ENCODE measurements at regions of chr12 and their contacts with region 1.

Region 1: GRCh38 chr12:2783936-2784600 is 10.7 kb upstream of the FKBP4 start:
- DNase-seq: peak; percentile 38 to 51 (median 45)
- H3K4me3 ChIP-seq: no peak overlapping the region
- H3K4me3 Mint-ChIP-seq: peak overlapping the region; percentile 70 to 92 (median 83)
- H3K27ac ChIP-seq: no peak overlapping the region
- H3K27ac Mint-ChIP-seq: peak overlapping the region in 3 of 7 donors; percentile 53 to 79 (median 55)
- H3K4me1 ChIP-seq: peaks cover 9% of the 10 kb centered on the region
- H3K4me1 Mint-ChIP-seq: peaks cover 9 to 13% (median 11%) of the 10 kb centered on the region in 4 donors
- H3K27me3 ChIP-seq: no peaks in the 10 kb centered on the region
- H3K27me3 Mint-ChIP-seq: peaks cover 9 to 17% of the 10 kb centered on the region in 2 donors

Region 2: DNA sequence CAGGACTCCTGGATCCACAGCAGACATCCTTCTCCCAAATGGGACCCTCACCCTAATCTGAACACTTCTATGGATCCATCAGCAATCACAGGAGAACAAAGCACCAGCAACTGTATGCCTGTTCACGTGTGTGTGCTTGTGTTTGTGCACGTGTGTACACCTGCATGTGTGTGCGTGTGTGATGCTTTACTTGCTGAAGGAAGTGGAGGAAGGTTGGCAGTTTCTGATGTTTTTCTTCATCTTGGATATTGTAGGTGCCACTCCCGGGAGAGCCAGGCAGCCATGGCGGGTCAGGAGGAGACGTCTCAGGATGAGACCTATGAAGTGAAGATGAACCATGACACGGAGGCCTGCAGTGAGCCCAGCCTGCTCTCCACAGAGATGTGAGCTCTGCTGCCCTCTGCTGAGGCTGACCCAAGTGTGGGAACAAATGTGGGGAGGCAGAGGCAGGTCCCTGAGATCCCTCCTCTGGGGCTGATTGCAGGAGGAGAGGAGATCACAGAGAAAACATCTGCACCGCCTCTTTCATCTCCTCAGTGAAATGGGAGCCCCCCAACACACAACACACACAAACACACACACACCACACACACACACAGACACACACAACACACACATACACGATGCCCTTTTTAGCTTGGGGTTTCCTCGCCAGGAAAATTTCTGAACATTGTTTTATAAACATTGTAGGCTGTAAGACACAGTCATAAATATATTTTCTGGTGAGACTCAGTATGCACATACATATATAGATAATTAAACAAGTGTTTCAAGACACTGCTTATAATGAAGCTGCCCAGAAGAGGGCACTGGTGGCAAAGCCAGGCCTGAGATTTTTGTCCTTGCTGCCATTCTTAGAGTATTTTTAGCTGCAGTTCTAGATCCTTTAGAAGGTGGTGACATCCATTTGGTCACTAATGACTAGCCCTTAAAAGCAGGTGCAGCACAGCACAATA is 101.5 kb before region 1 on chr12:
- CTCF ChIA-PET with region 1: interaction called, 121 read pairs
- POLR2A ChIA-PET with region 1: interaction called, 4 read pairs
- intact Hi-C with region 1: loop called (anchors 1 kb)
- DNase-seq: peak; percentile 54 to 65 (median 62)
- H3K4me3 ChIP-seq: no peak overlapping the region
- H3K4me3 Mint-ChIP-seq: peak overlapping the region in 4 of 8 donors; percentile 57 to 79 (median 75)
- H3K27ac ChIP-seq: no peak overlapping the region
- H3K27ac Mint-ChIP-seq: peak overlapping the region; percentile 54 to 98 (median 94)
- H3K4me1 ChIP-seq: no peaks in the 10 kb centered on the region
- H3K4me1 Mint-ChIP-seq: peaks cover 6 to 13% (median 9%) of the 10 kb centered on the region in 4 donors
- H3K27me3 ChIP-seq: no peaks in the 10 kb centered on the region
- H3K27me3 Mint-ChIP-seq: peaks cover 0 to 2% of the 10 kb centered on the region in 2 donors

Region 3: GRCh38 chr12:2733477-2734355 is 50.4 kb before region 1 on chr12:
- CTCF ChIA-PET with region 1: no interaction called
- POLR2A ChIA-PET with region 1: no interaction called
- intact Hi-C with region 1: no loop called
- DNase-seq: no peak
- H3K4me3 ChIP-seq: no peak overlapping the region
- H3K4me3 Mint-ChIP-seq: no peak overlapping the region
- H3K27ac ChIP-seq: no peak overlapping the region
- H3K27ac Mint-ChIP-seq: no peak overlapping the region
- H3K4me1 ChIP-seq: no peaks in the 10 kb centered on the region
- H3K4me1 Mint-ChIP-seq: peaks cover 2 to 11% (median 7%) of the 10 kb centered on the region in 4 donors
- H3K27me3 ChIP-seq: peaks cover 4% of the 10 kb centered on the region
- H3K27me3 Mint-ChIP-seq: peaks cover 15 to 46% of the 10 kb centered on the region in 2 donors

Region 4: GRCh38 chr12:2794736-2795289 is 10.7 kb after region 1 on chr12 and contains the start of gene FKBP4:
- CTCF ChIA-PET with region 1: interaction called, 18 read pairs
- POLR2A ChIA-PET with region 1: interaction called, 6 read pairs
- intact Hi-C with region 1: no loop called
- DNase-seq: peak; percentile 83 to 92 (median 86)
- H3K4me3 ChIP-seq: peak within 1 kb of the TSS; percentile 81 to 83
- H3K4me3 Mint-ChIP-seq: peak within 1 kb of the TSS; percentile 91 to 97 (median 94)
- H3K27ac ChIP-seq: peak within 1 kb of the TSS; percentile 55
- H3K27ac Mint-ChIP-seq: peak within 1 kb of the TSS; percentile 77 to 96 (median 90)
- H3K4me1 ChIP-seq: peaks cover 11% of the 10 kb centered on the region
- H3K4me1 Mint-ChIP-seq: peaks cover 11 to 36% (median 14%) of the 10 kb centered on the region in 4 donors
- H3K27me3 ChIP-seq: no peaks in the 10 kb centered on the region
- H3K27me3 Mint-ChIP-seq: no peaks in the 10 kb centered on the region
- total RNA-seq, gene FKBP4: 51.3 to 53.3 TPM

Region 5: DNA sequence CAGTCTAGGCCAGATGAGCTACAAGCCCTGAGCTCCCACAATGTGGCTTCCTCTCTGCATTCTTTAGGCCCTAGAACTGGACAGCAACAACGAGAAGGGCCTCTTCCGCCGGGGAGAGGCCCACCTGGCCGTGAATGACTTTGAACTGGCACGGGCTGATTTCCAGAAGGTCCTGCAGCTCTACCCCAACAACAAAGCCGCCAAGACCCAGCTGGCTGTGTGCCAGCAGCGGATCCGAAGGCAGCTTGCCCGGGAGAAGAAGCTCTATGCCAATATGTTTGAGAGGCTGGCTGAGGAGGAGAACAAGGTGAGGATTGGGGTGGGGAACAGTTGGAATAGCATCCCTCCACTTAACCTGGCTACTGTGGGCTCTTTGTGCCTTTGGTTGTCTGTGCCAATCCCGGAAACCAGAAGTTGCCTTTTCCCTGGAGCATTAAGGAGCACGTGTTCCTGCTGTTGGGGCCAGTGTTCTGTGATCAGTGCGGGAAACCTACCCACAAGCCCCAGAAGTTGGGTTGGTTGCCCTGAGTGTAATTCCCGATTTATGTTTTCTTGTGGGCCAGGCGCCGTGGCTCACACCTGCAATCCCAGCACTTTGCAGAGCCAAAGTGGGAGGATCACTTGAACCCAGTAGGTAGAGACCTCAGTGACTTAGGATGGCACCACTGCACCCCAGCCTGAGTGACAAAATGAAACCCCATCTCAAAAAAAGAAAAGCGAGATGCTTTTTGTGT is 17.1 kb after region 1 on chr12:
- CTCF ChIA-PET with region 1: interaction called, 18 read pairs
- POLR2A ChIA-PET with region 1: interaction called, 3 read pairs
- intact Hi-C with region 1: no loop called
- DNase-seq: no peak
- H3K4me3 ChIP-seq: no peak overlapping the region
- H3K4me3 Mint-ChIP-seq: no peak overlapping the region
- H3K27ac ChIP-seq: no peak overlapping the region
- H3K27ac Mint-ChIP-seq: peak overlapping the region in 2 of 7 donors; percentile 48 to 60
- H3K4me1 ChIP-seq: peaks cover 9% of the 10 kb centered on the region
- H3K4me1 Mint-ChIP-seq: peaks cover 10 to 23% (median 14%) of the 10 kb centered on the region in 4 donors
- H3K27me3 ChIP-seq: no peaks in the 10 kb centered on the region
- H3K27me3 Mint-ChIP-seq: no peaks in the 10 kb centered on the region

Region 6: GRCh38 chr12:2834581-2835491 is 50.8 kb after region 1 on chr12 and contains the start of gene NRIP2:
- CTCF ChIA-PET with region 1: no interaction called
- POLR2A ChIA-PET with region 1: no interaction called
- intact Hi-C with region 1: no loop called
- DNase-seq: no peak
- H3K4me3 ChIP-seq: no peak within 1 kb of the TSS
- H3K4me3 Mint-ChIP-seq: no peak within 1 kb of the TSS
- H3K27ac ChIP-seq: no peak within 1 kb of the TSS
- H3K27ac Mint-ChIP-seq: peak within 1 kb of the TSS in 1 of 7 donors; percentile 68
- H3K4me1 ChIP-seq: no peaks in the 10 kb centered on the region
- H3K4me1 Mint-ChIP-seq: peaks cover 0 to 9% (median 3%) of the 10 kb centered on the region in 4 donors
- H3K27me3 ChIP-seq: no peaks in the 10 kb centered on the region
- H3K27me3 Mint-ChIP-seq: no peaks in the 10 kb centered on the region
- total RNA-seq, gene NRIP2: not detected

Measured in CD4-positive, alpha-beta memory T cell (primary cell).